ENCODE measurements at regions of chr20 and their contacts with region 1.

Region 1: DNA sequence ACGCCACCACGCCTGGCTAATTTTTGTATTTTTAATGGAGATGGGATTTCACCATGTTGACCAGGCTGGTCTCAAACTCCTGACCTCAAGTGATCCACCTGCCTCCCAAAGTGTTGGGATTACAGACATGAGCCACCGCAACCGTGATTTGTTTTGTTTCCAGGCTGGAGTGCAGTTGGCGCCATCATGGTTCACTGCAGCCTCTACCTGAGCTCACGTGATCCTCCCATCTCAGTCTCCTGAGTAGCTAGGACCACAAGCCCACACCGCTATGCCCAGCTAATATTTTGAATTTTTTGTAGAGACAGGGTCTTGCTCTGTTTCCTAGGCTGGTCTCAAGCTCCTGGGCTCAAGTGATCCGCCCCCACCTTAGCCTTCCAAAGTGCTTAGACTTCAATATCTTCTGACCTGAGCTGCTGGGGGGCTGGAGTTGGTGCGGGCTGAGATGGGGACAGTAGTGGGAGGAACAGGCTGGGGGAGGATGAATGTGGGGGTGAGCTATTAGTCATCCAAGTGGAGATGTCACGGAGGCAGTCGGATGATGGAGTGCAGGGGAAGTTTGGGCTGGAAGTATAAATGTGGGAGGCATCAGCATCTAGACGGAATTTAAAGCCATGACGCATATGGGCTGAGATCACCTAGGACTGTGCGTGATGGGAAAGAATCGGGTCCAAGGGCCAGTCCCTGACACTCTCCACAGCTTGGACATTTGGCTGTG is 23.1 kb upstream of the ZMYND8 start:
- DNase-seq: peak; percentile 75 to 83 (median 78)
- ATAC-seq: peak; percentile 26; the same call in 2 of the 3 replicates
- H3K4me3 ChIP-seq: no peak overlapping the region
- H3K27ac ChIP-seq: peak overlapping the region; percentile 38; the same call in 1 of the 3 replicates
- H3K4me1 ChIP-seq: peaks cover 20 to 36% of the 10 kb centered on the region in 2 experiments
- H3K27me3 ChIP-seq: no peaks in the 10 kb centered on the region
- CTCF ChIP-seq: no peak
- EP300 ChIP-seq: peak; percentile 67; the same call in 1 of the 2 replicates
- POLR2A ChIP-seq: no peak
- RAD21 ChIP-seq: 0 out of 4 replicates have a peak, but pooled peaks of 1 of the 2 experiments have one; percentile 13

Region 2: GRCh38 chr20:46752728-46753127 is 626.9 kb before region 1 on chr20:
- CTCF ChIA-PET with region 1: no interaction called
- POLR2A ChIA-PET with region 1: no interaction called
- in situ Hi-C with region 1: loop called (anchors 25 kb)
- intact Hi-C with region 1: loop called (anchors 5 kb)
- DNase-seq: peak; percentile 41 to 70 (median 52)
- ATAC-seq: peak; percentile 62
- H3K4me3 ChIP-seq: no peak overlapping the region
- H3K27ac ChIP-seq: no peak overlapping the region
- H3K4me1 ChIP-seq: peaks cover 2 to 4% of the 10 kb centered on the region in 2 experiments; a peak in 3 of 5 replicates
- H3K27me3 ChIP-seq: peaks cover 7 to 13% of the 10 kb centered on the region in 2 experiments; a peak in 4 of 5 replicates
- CTCF ChIP-seq: peak; percentile 64 to 78 (median 76)
- EP300 ChIP-seq: no peak
- POLR2A ChIP-seq: no peak
- RAD21 ChIP-seq: peak; percentile 30 to 65; a peak in 3 of 4 replicates

Region 3: GRCh38 chr20:47196091-47197081 is 183.2 kb before region 1 on chr20:
- CTCF ChIA-PET with region 1: interaction called, 24 read pairs
- POLR2A ChIA-PET with region 1: interaction called, 4 read pairs
- in situ Hi-C with region 1: no loop called
- intact Hi-C with region 1: loop called (anchors 1 kb)
- DNase-seq: peak; percentile 83 to 87 (median 84)
- ATAC-seq: peak; percentile 90
- H3K4me3 ChIP-seq: no peak overlapping the region
- H3K27ac ChIP-seq: no peak overlapping the region
- H3K4me1 ChIP-seq: peaks cover 8 to 17% of the 10 kb centered on the region in 2 experiments
- H3K27me3 ChIP-seq: peaks cover 0 to 5% of the 10 kb centered on the region in 2 experiments; a peak in 2 of 5 replicates
- CTCF ChIP-seq: peak; percentile 93 to 98 (median 95)
- EP300 ChIP-seq: no peak
- POLR2A ChIP-seq: no peak
- RAD21 ChIP-seq: peak; percentile 90 to 97

Region 4: DNA sequence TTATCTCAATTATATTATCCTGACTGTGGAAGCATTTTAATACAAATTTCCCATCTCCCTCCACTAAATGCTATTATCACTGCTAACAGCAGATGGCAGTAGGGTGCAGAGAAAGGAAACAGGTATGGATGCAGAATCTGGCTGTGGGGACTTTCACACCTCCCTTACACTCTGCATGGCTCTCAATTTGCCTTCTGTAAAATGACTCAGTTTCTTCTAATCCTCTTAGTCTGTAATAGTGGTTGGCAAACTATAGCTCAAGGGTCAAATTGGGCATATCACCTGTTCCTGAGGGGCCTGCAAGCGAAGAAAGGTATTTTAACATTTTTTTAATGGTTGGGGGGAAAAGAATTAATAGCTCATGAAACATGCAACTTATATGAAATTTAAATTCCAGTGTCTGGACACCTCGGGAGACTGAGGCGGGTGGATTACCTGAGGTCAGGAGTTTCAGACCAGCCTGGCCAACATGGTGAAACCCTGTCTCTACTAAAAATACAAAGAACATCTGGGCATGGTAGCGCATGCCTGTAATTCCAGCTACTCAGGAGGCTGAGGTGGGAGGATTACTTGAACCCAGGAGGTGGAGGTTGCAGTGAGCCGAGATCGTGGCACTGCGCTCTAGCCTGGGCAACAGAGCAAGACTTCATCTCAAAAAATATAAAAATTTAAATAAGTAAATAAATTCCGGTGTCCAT is 106.5 kb before region 1 on chr20:
- CTCF ChIA-PET with region 1: interaction called, 73 read pairs
- POLR2A ChIA-PET with region 1: interaction called, 8 read pairs
- in situ Hi-C with region 1: no loop called
- intact Hi-C with region 1: loop called (anchors 1 kb)
- DNase-seq: peak; percentile 54 to 73 (median 64)
- ATAC-seq: peak; percentile 74
- H3K4me3 ChIP-seq: no peak overlapping the region
- H3K27ac ChIP-seq: no peak overlapping the region
- H3K4me1 ChIP-seq: peaks cover 5 to 7% of the 10 kb centered on the region in 2 experiments; a peak in 3 of 5 replicates
- H3K27me3 ChIP-seq: no peaks in the 10 kb centered on the region
- CTCF ChIP-seq: peak; percentile 74 to 82 (median 79)
- EP300 ChIP-seq: no peak
- POLR2A ChIP-seq: no peak
- RAD21 ChIP-seq: peak; percentile 80 to 83

Region 5: GRCh38 chr20:47296950-47297349 is 82.6 kb before region 1 on chr20:
- CTCF ChIA-PET with region 1: interaction called, 30 read pairs
- POLR2A ChIA-PET with region 1: interaction called, 7 read pairs
- in situ Hi-C with region 1: no loop called
- intact Hi-C with region 1: loop called (anchors 1 kb)
- DNase-seq: peak in 1 of 4 experiments; percentile 41
- ATAC-seq: peak; percentile 69
- H3K4me3 ChIP-seq: no peak overlapping the region
- H3K27ac ChIP-seq: no peak overlapping the region
- H3K4me1 ChIP-seq: no peaks in the 10 kb centered on the region; a peak in 2 of 5 replicates
- H3K27me3 ChIP-seq: no peaks in the 10 kb centered on the region
- CTCF ChIP-seq: peak; percentile 46 to 58 (median 57); a peak in 4 of 6 replicates
- EP300 ChIP-seq: no peak
- POLR2A ChIP-seq: no peak
- RAD21 ChIP-seq: peak; percentile 23 to 68; a peak in 3 of 4 replicates

Region 6: DNA sequence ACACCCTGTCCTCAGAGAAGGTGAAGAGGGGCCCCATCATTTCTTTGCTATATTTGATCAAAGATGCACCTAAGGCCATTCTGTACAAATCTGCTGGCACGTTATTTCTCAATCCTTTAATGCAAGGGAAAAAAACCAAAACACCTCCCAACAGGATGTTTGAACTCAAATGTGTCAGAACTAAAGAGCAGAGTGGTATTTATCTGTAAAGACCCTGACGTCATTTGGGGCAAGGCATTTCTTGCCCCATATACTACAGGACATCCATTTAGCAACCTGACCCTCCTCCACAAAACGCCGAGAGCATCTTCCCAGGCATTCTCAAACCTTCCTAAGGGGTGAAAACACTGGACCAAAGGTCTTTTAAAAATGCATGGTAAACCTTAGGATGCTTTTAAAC is 73.9 kb before region 1 on chr20:
- CTCF ChIA-PET with region 1: no interaction called
- POLR2A ChIA-PET with region 1: interaction called, 3 read pairs
- in situ Hi-C with region 1: loop called (anchors 5 kb)
- intact Hi-C with region 1: no loop called
- DNase-seq: no peak
- ATAC-seq: no peak
- H3K4me3 ChIP-seq: no peak overlapping the region
- H3K27ac ChIP-seq: no peak overlapping the region
- H3K4me1 ChIP-seq: peaks cover 0 to 6% of the 10 kb centered on the region in 2 experiments; a peak in 2 of 5 replicates
- H3K27me3 ChIP-seq: no peaks in the 10 kb centered on the region
- CTCF ChIP-seq: no peak
- EP300 ChIP-seq: no peak
- POLR2A ChIP-seq: no peak
- RAD21 ChIP-seq: no peak

Region 7: GRCh38 chr20:47317127-47317895 is 62.3 kb before region 1 on chr20:
- CTCF ChIA-PET with region 1: no interaction called
- POLR2A ChIA-PET with region 1: interaction called, 4 read pairs
- in situ Hi-C with region 1: no loop called
- intact Hi-C with region 1: loop called (anchors 5 kb)
- DNase-seq: peak; percentile 75 to 96 (median 82)
- ATAC-seq: peak; percentile 70
- H3K4me3 ChIP-seq: no peak overlapping the region
- H3K27ac ChIP-seq: peak overlapping the region; percentile 89
- H3K4me1 ChIP-seq: peaks cover 60 to 66% of the 10 kb centered on the region in 2 experiments
- H3K27me3 ChIP-seq: no peaks in the 10 kb centered on the region
- CTCF ChIP-seq: no peak
- EP300 ChIP-seq: peak; percentile 83; the same call in 1 of the 2 replicates
- POLR2A ChIP-seq: peak; percentile 56
- RAD21 ChIP-seq: no peak

Region 8: GRCh38 chr20:47767972-47768794 is 388.6 kb after region 1 on chr20:
- CTCF ChIA-PET with region 1: no interaction called
- POLR2A ChIA-PET with region 1: no interaction called
- in situ Hi-C with region 1: no loop called
- intact Hi-C with region 1: no loop called
- DNase-seq: no peak
- ATAC-seq: no peak
- H3K4me3 ChIP-seq: no peak overlapping the region
- H3K27ac ChIP-seq: no peak overlapping the region
- H3K4me1 ChIP-seq: peaks cover 0 to 4% of the 10 kb centered on the region in 2 experiments; a peak in 1 of 5 replicates
- H3K27me3 ChIP-seq: peaks cover 24 to 61% of the 10 kb centered on the region in 2 experiments; a peak in 4 of 5 replicates
- CTCF ChIP-seq: no peak
- EP300 ChIP-seq: no peak
- POLR2A ChIP-seq: no peak
- RAD21 ChIP-seq: no peak

Measured in K562 (cell line).